ENCODE measurements at regions of chr2 and their contacts with region 1.

Region 1: DNA sequence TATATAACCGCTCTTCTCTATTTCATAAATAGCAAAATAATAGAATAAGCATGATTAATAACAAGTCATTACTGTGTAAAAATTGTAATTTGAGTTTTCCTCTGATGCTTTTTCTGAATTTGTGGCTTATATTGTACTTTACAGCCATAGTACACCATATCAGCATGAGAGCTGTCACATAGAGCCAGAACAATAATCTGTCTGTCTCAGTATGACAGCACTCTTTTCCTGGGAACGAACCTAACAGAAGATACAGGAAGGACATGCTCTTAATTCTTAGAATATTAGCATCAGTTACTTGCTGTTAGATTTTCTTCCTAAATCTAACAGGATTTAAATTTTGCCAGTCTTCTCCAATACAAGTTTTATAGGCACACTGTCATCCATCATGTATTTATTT is 21.3 kb upstream of the NRXN1 start:
- DNase-seq: no peak
- ATAC-seq: no peak
- H3K4me3 ChIP-seq: no peak overlapping the region
- H3K27ac ChIP-seq: no peak overlapping the region
- H3K4me1 ChIP-seq: no peaks in the 10 kb centered on the region
- H3K27me3 ChIP-seq: no peaks in the 10 kb centered on the region
- CTCF ChIP-seq: no peak
- POLR2A ChIP-seq: no peak
- RAD21 ChIP-seq: no peak

Region 2: GRCh38 chr2:50995610-50996009 is 57.6 kb before region 1 on chr2:
- CTCF ChIA-PET with region 1: no interaction called
- POLR2A ChIA-PET with region 1: no interaction called
- dilution Hi-C with region 1: no loop called
- in situ Hi-C with region 1: no loop called
- intact Hi-C with region 1: loop called (anchors 2 kb)
- DNase-seq: peak; percentile 80
- ATAC-seq: peak; percentile 92
- H3K4me3 ChIP-seq: no peak overlapping the region
- H3K27ac ChIP-seq: no peak overlapping the region
- H3K4me1 ChIP-seq: no peaks in the 10 kb centered on the region
- H3K27me3 ChIP-seq: no peaks in the 10 kb centered on the region
- CTCF ChIP-seq: no peak
- POLR2A ChIP-seq: no peak
- RAD21 ChIP-seq: no peak

Measured in IMR-90 (cell line).